Colonic mucosa (tissue), 4 donors: ENCODE measurements at regions of chr20 and their contacts with region 1.

Region 1: DNA sequence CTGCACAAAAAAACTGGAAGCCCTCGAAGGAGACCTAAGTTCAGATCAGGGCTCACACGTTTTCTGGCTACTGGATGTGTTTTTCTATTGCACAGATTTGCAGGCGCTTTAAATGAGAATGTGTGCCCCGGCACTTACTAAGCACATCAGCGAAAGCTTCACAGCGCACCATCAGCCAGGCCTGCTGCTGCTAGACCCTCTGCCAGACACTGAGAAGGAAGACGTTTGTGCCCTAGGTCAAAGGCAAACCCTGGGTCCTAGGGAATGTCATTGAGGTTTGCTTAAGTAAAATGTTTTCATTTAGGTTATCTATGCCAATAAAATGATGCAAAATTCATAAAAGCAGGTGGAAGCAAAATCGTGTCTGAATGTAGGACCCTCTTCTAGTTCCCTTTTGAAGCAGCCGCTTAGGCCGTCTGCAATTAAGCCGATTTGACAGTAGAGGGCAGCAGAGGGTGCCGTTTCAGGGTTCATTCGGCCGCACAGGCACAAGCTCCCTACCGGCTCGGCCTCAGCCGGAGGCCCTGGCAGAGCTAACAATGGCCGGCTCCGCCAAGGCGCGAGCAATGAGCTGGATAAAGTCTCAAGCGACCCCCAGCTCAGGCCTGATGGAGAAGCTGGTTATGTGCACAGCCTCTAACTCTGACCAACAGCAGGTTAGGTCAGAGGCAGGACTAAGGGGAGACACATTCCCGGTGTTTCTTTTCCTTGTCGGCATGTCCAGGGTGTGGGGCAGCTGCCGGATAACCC is 107.2 kb upstream of the FOXA2 start:
- DNase-seq: peak; percentile 74
- H3K4me3 ChIP-seq: no peak overlapping the region
- H3K27ac ChIP-seq: no peak overlapping the region
- H3K4me1 ChIP-seq: no peaks in the 10 kb centered on the region
- H3K27me3 ChIP-seq: no peaks in the 10 kb centered on the region
- CTCF ChIP-seq: peak; percentile 85

Region 2: GRCh38 chr20:22555791-22556564 is 135.6 kb before region 1 on chr20:
- intact Hi-C with region 1: no loop called
- DNase-seq: no peak
- H3K4me3 ChIP-seq: no peak overlapping the region
- H3K27ac ChIP-seq: no peak overlapping the region
- H3K4me1 ChIP-seq: no peaks in the 10 kb centered on the region
- H3K27me3 ChIP-seq: no peaks in the 10 kb centered on the region
- CTCF ChIP-seq: no peak

Region 3: GRCh38 chr20:22974353-22974752 is 282.8 kb after region 1 on chr20:
- intact Hi-C with region 1: loop called (anchors 5 kb)
- DNase-seq: no peak
- H3K4me3 ChIP-seq: no peak overlapping the region
- H3K27ac ChIP-seq: no peak overlapping the region
- H3K4me1 ChIP-seq: no peaks in the 10 kb centered on the region
- H3K27me3 ChIP-seq: no peaks in the 10 kb centered on the region
- CTCF ChIP-seq: peak; percentile 14

Region 4: GRCh38 chr20:23235173-23236027 is 543.9 kb after region 1 on chr20:
- intact Hi-C with region 1: loop called (anchors 10 kb)
- DNase-seq: peak; percentile 61
- H3K4me3 ChIP-seq: no peak overlapping the region
- H3K27ac ChIP-seq: no peak overlapping the region
- H3K4me1 ChIP-seq: no peaks in the 10 kb centered on the region
- H3K27me3 ChIP-seq: no peaks in the 10 kb centered on the region
- CTCF ChIP-seq: peak; percentile 73

Region 5: GRCh38 chr20:23349338-23350195 is 658.0 kb after region 1 on chr20:
- intact Hi-C with region 1: loop called (anchors 10 kb)
- DNase-seq: peak; percentile 32
- H3K4me3 ChIP-seq: peak overlapping the region; percentile 94
- H3K27ac ChIP-seq: peak overlapping the region; percentile 96
- H3K4me1 ChIP-seq: peaks cover 8% of the 10 kb centered on the region
- H3K27me3 ChIP-seq: no peaks in the 10 kb centered on the region
- CTCF ChIP-seq: peak; percentile 52